ENCODE measurements at regions of chr6 and their contacts with region 1.

Region 1: GRCh38 chr6:20534295-20535262 is at the start of gene CDKAL1:
- DNase-seq: peak; percentile 91
- ATAC-seq: peak; percentile 92 to 93
- total RNA-seq, gene CDKAL1: 9.8 to 10.8 TPM

Region 2: GRCh38 chr6:20092071-20092566 is 442.5 kb before region 1 on chr6:
- intact Hi-C with region 1: loop called in 1 of 2 experiments (anchors 5 kb)
- DNase-seq: no peak
- ATAC-seq: no peak

Region 3: GRCh38 chr6:20291764-20292580 is 242.6 kb before region 1 on chr6:
- intact Hi-C with region 1: loop called (anchors 2 to 5 kb)
- DNase-seq: peak; percentile 78
- ATAC-seq: peak; percentile 90

Region 4: DNA sequence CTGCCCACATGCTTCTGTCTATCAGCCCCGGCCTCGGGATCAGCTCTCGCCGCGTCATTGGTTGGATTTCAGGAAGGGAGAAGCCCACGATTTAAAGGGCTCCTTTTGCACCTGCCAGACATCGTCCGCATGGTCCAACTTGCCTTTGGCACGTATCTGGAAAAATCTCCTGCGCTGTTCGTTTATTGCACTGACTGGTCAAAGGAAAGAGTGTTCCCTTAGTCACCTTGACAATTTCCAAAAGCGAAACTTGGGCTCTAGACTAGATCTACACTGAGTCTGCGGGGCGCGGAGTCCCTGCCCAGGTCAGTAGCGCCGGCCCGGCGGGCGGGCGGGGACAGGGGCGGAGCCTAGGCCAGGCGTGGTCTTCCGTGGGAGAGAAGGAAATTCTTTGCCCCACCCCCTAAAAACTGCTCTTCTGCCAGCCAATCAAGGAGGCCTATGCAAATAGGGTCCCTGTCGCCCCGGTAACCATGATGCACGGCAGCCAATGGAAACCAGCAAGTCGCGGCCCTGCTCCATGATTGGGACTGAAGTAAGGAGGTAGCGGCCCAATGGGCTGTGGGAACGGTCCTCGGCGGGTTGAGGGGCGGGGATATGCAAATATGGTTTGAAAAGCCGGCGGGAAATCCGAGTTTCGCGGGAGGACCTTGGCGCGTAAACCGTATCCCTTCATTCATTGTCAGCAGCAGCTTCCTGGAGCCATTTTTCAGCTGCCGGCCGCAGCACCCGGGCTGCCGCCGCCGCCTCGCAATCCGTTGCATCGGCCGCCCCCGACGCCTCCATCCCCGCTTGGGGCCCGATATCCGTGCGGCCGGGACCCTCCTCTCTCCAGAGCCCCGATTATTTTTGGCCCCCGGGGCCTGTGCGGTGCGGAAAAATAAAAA is 133.1 kb before region 1 on chr6 and contains the start of gene E2F3:
- intact Hi-C with region 1: loop called in 1 of 2 experiments (anchors 5 kb)
- DNase-seq: peak; percentile 100
- ATAC-seq: peak; percentile 95 to 96
- total RNA-seq, gene E2F3: 4.8 to 10.0 TPM

Region 5: GRCh38 chr6:20732896-20733295 is 198.3 kb after region 1 on chr6:
- intact Hi-C with region 1: no loop called
- DNase-seq: no peak
- ATAC-seq: no peak

Region 6: DNA sequence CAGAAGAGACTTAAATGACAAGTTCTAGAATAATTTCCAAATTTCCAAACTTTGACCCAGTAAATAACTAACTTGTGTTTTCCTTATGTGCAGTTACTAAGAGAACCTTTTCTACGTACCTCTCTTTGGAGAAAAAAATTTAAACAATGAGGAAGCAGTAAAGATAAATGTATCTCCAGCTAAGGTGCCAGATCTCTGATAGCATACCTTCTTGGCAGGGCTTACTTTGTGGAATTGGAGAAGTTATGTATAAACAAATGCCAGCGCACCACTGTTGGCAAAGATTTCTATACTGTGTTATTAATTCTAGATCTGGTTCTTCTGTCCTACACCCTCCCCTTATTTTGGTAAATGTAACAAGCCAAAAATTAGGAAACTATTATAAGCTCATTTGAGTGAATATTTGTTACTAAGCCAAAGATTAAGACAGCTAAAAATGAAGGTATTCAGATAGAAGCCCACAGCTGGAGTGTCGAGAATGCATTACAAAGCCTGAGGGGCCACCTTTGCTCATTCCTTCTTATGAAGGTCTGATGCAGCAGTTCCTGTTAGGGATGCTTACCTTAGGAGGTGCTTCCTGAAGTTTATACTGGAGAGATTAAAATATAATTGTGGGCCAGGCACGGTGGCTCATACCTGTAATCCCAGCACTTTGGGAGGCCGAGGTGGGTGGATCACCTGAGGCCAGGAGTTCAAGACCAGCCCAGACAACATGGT is 685.9 kb after region 1 on chr6:
- intact Hi-C with region 1: no loop called
- DNase-seq: no peak
- ATAC-seq: no peak

Measured in left cardiac atrium (tissue), 4 donors.